Activated CD4-positive, alpha-beta memory T cell treated with anti-CD3 and anti-CD28 coated beads, Interleukin-2, amount 10 ng/mL, durations not matched to agents 7 days and 5 days (primary cell): ENCODE measurements at regions of chr5 and their contacts with region 1.

Region 1: DNA sequence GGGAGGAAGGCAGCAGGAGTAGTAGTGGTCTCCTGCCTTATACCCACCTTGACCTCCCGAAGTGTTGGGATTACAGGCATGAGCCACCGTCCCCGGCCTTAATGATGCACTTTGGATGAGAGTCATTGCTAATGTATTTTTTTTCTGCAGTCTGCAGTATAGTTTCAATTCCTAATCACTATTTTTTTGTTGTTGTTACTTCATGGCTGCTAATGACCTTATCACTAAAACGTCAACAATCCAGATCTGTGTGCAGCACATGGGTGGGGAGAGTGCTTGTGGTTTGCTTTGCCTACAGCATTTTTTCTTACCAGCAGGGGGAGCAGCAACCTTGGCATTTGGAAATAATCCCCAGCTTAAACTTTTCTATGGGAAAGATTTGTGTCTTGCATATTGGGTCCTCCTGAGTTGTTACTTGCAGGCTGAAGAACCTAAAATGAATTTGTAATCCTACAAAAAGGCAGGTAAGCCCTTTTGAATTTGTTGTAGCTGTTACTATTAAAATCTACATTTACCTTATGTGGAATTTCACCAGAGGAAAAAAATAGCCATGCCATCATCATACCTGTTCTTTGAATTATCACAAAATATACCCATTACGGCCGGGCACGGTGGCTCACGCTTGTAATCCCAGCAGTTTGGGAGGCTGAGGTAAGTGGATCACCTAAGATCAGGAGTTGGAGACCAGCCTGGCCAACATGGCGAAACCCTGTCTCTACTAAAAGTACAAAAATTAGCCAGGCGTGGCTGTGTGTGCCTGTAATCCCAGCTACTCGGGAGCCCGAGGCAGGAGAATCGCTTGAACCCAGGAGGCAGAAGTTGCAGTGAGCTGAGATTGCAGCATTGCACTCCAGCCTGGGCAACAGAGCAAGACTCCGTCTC is 6.3 kb upstream of the MED7 start:
- DNase-seq: peak; percentile 85
- H3K4me3 Mint-ChIP-seq: no peak overlapping the region
- H3K27ac Mint-ChIP-seq: peak overlapping the region; percentile 33
- H3K4me1 Mint-ChIP-seq: peaks cover 36% of the 10 kb centered on the region
- H3K27me3 Mint-ChIP-seq: no peaks in the 10 kb centered on the region

Region 2: DNA sequence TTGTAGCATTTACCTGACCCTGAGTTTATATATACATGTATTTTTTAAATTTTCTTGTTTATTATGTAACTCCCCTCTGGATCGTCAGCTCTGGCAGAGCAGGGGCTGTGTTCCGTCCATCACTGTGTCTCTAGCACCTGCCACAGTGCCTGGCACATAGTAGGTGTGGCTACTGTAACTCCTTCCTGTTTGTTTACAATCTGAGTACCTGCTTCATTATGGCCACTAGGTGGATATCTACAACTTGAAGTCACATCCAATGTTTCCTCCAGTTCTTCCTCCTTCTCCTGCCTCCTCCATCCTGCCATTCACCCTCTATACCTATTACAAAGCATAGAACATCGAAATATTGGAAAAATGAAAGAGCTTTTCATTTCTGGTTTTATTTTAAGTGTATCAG is 313.1 kb before region 1 on chr5:
- CTCF ChIA-PET with region 1: no interaction called
- POLR2A ChIA-PET with region 1: no interaction called
- DNase-seq: peak; percentile 18
- H3K4me3 Mint-ChIP-seq: no peak overlapping the region
- H3K27ac Mint-ChIP-seq: no peak overlapping the region
- H3K4me1 Mint-ChIP-seq: peaks cover 7% of the 10 kb centered on the region
- H3K27me3 Mint-ChIP-seq: peaks cover 21% of the 10 kb centered on the region

Region 3: DNA sequence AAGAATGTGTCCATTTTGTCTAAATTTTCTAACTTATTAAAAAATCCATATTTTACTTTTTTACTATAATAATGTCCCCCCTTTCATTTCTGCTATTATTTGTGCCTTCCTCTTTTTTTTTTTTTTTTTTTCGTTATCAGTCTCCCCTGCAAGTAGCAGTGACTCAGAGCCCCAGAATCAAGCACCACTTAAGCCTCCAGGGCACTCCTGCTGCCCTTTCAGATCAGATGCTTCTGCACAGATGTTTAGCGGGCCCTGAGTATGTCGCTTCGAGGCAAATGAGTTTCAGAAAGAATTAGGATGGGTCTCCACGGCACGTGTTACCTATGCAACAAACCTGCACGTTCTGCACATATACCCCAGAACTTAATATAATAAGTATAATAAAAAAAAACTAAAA is 18.1 kb before region 1 on chr5:
- CTCF ChIA-PET with region 1: no interaction called
- POLR2A ChIA-PET with region 1: no interaction called
- DNase-seq: no peak
- H3K4me3 Mint-ChIP-seq: no peak overlapping the region
- H3K27ac Mint-ChIP-seq: no peak overlapping the region
- H3K4me1 Mint-ChIP-seq: peaks cover 26% of the 10 kb centered on the region
- H3K27me3 Mint-ChIP-seq: peaks cover 2% of the 10 kb centered on the region

Region 4: GRCh38 chr5:157167214-157167621 is 18.2 kb after region 1 on chr5:
- CTCF ChIA-PET with region 1: interaction called, 13 read pairs
- POLR2A ChIA-PET with region 1: interaction called, 24 read pairs
- DNase-seq: peak; percentile 24
- H3K4me3 Mint-ChIP-seq: peak overlapping the region; percentile 46
- H3K27ac Mint-ChIP-seq: peak overlapping the region; percentile 77
- H3K4me1 Mint-ChIP-seq: peaks cover 72% of the 10 kb centered on the region
- H3K27me3 Mint-ChIP-seq: no peaks in the 10 kb centered on the region

Region 5: DNA sequence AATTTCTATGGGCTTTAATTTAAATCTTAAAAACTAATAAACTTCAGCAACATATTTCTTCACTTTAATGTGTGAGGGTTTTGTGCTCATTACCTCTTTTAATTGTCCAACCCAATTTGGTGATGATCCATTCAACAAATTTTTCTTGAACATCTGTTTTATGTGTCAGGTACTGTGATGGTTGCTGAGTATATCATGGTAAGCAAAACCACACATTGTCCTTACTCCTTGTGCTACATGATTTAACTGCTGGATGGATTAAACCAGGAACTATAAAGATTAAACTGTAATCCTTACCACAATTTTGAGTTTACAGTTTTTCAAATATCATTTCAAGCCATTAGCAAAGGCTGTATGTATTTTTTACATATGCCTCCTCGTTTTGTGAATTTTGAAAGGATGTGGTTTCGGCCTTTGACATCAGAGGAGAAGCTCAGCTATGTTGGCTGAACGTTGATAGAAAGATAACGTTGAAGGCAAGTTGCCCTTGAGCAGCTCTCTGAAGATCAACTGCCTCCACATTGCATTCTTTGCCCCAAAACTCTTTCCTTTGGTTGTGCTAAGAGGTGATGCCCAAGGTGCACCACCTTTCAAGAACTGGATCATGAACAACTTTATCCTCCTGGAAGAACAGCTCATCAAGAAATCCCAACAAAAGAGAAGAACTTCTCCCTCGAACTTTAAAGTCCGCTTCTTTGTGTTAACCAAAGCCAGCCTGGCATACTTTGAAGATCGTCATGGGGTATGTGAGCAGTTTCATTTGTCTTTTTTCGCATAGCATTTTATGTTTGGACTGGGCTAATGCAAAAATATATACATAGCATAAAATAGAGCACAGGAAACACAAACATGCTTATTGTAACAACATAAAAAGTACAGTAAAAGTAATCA is 31.6 kb after region 1 on chr5 and contains the start of gene ITK:
- CTCF ChIA-PET with region 1: interaction called, 19 read pairs
- POLR2A ChIA-PET with region 1: interaction called, 106 read pairs
- DNase-seq: peak; percentile 67
- H3K4me3 Mint-ChIP-seq: peak within 1 kb of the TSS; percentile 94
- H3K27ac Mint-ChIP-seq: peak within 1 kb of the TSS; percentile 99
- H3K4me1 Mint-ChIP-seq: peaks cover 49% of the 10 kb centered on the region
- H3K27me3 Mint-ChIP-seq: no peaks in the 10 kb centered on the region
- total RNA-seq, gene ITK: 247 to 249 TPM

Region 6: DNA sequence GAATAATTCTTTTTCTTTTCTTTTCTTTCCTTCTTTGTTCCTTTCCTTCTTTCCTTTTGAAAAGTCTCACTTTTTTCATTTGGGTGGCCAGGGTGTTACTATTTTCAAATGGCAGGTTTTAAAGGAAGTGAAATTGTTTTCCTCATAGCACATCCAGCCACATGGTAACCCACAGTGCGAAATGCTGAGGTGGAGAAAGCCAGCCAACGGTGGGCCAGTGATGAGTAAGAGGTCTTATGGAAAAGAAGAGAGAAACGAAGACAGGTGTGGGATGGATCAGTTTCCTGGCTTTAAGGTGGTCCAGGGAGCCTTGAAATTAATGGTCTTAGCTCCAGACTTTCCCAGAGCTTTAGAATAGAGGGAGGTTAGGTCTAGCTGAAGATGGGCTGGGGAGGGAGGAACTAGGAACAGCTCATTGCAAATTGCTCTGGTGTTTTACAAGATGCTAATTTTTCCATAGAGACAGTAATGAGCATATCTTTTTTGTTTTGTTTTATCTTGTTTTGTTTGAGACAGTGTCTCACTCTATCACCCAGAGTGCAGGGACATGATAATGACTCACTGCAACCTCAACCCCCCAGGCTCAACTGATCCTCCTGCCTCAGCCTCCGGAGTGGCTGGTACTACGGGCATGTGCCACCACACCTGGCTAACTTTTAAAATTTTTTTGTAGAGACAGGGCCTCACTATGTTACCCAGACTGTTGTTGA is 49.5 kb after region 1 on chr5:
- CTCF ChIA-PET with region 1: interaction called, 9 read pairs
- POLR2A ChIA-PET with region 1: interaction called, 25 read pairs
- DNase-seq: peak; percentile 58
- H3K4me3 Mint-ChIP-seq: peak overlapping the region; percentile 55
- H3K27ac Mint-ChIP-seq: peak overlapping the region; percentile 89
- H3K4me1 Mint-ChIP-seq: peaks cover 94% of the 10 kb centered on the region
- H3K27me3 Mint-ChIP-seq: no peaks in the 10 kb centered on the region

Region 7: DNA sequence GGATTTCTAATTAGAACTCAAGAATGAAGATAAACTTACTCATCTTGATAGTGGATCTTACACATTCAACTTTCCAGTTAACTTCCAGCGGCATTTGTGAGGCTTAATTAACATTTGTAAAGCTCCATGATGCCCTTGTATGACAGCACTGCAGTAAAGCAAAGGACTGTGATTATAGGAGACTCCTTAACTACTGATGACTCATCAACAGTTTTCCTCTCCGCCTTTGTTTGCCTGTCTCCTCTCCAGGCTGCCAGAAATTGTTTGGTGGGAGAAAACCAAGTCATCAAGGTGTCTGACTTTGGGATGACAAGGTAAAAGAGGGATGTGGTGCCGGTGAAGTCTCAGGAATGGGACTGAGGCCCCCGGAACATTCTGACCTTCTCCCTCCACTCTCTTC is 96.5 kb after region 1 on chr5:
- CTCF ChIA-PET with region 1: interaction called, 12 read pairs
- POLR2A ChIA-PET with region 1: interaction called, 5 read pairs
- DNase-seq: no peak
- H3K4me3 Mint-ChIP-seq: no peak overlapping the region
- H3K27ac Mint-ChIP-seq: peak overlapping the region; percentile 98
- H3K4me1 Mint-ChIP-seq: peaks cover 75% of the 10 kb centered on the region
- H3K27me3 Mint-ChIP-seq: no peaks in the 10 kb centered on the region

Region 8: GRCh38 chr5:157312492-157312891 is 163.5 kb after region 1 on chr5:
- CTCF ChIA-PET with region 1: interaction called, 15 read pairs
- POLR2A ChIA-PET with region 1: interaction called, 18 read pairs
- DNase-seq: peak; percentile 68
- H3K4me3 Mint-ChIP-seq: no peak overlapping the region
- H3K27ac Mint-ChIP-seq: peak overlapping the region; percentile 37
- H3K4me1 Mint-ChIP-seq: peaks cover 30% of the 10 kb centered on the region
- H3K27me3 Mint-ChIP-seq: no peaks in the 10 kb centered on the region